OCI-LY7 (cell line): ENCODE measurements at regions of chr15 and their contacts with region 1.

Region 1: DNA sequence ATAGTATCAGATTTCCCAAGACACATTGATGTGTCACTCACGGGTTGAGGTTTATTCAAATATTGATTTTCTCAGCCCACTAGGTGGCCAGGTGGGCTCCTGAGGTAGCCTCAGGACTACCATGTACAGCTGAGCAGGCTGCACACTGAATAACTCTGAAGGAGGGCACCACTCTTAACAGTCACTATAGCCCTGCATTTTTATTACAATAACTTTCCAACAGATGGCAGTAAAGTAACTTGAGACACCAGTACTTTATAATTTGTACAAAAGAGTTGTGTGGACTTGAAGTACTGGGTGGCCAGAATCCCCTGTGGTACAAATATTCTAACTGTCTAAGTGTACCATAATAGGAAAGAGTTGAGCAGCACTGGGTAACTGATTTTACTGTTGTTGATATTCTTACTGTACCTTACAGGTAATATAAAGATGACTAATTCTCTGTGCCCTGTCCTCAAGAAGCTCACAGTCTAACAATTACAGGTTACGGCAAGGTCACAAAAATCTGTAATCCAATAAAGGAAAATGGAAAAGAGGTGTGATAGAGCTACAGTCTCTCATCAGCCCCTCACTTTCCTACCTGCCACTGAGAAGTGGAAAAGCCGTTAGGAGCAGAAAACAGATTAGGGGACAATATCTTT is 76.0 kb downstream of the ETFA start:
- DNase-seq: peak; percentile 58
- H3K4me3 ChIP-seq: no peak overlapping the region
- H3K27ac ChIP-seq: no peak overlapping the region
- H3K4me1 ChIP-seq: no peaks in the 10 kb centered on the region
- CTCF ChIP-seq: peak; percentile 83

Region 2: GRCh38 chr15:76330080-76330680 is 94.9 kb after region 1 on chr15:
- CTCF ChIA-PET with region 1: no interaction called
- POLR2A ChIA-PET with region 1: no interaction called
- intact Hi-C with region 1: loop called (anchors 5 kb)
- DNase-seq: no peak
- H3K4me3 ChIP-seq: no peak overlapping the region
- H3K27ac ChIP-seq: no peak overlapping the region
- H3K4me1 ChIP-seq: peaks cover 7% of the 10 kb centered on the region
- CTCF ChIP-seq: peak; percentile 49

Region 3: DNA sequence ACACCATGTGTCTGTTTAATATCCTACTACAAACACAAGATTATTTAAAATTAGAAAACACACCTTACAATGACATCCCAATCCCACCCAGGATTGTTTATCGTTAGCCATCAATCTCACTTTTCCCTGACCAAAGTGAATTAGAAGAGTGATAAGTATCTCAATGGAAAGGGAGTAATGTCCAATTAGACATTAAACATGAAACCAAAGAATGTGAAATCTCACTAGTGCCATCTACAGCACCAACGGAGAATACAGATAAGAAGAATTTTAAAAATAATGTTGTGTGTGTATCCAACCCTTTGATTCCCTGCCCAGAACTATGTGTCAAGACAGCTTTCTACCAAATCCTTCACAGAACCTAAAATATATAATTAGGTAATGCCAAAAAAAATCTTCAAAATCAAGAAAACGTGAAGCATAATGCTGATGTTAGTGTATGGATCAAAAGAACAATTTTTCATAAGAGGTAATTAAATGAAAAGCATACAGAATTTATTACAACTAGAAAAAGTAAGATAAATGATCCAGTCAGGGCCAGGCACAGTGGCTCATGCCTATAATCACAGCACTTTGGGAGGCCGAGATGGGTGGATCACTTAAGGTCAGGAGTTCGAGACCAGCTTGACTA is 605.6 kb after region 1 on chr15:
- CTCF ChIA-PET with region 1: no interaction called
- POLR2A ChIA-PET with region 1: no interaction called
- intact Hi-C with region 1: loop called (anchors 10 kb)
- DNase-seq: peak; percentile 34
- H3K4me3 ChIP-seq: no peak overlapping the region
- H3K27ac ChIP-seq: no peak overlapping the region
- H3K4me1 ChIP-seq: no peaks in the 10 kb centered on the region
- CTCF ChIP-seq: peak; percentile 84